ENCODE measurements at regions of chr1 and their contacts with region 1.

Region 1: DNA sequence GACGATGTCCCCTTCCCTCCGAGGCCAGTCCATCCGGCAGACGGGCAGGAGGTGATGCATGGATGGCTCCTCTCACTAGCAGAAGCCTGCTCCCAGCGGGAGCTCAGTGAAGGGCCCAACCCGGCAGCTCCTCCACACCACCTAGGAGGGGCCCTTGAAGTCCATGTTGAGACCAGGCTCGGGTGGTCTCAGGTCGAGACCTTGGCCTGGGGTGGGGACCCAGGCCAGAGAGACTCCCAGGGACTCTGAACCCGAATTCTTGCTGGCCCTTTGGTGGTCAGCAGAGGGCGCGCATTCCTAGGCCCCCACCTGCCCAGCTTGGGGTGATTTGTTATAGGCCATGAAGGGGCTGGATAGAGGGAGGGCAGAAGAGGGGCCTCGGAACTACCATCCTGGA is 642 bp upstream of the NT5C1A start:
- DNase-seq: peak; percentile 68
- ATAC-seq: peak; percentile 64
- H3K4me3 Mint-ChIP-seq: peak overlapping the region; percentile 63
- H3K27ac Mint-ChIP-seq: no peak overlapping the region
- H3K4me1 Mint-ChIP-seq: no peaks in the 10 kb centered on the region
- H3K27me3 Mint-ChIP-seq: peaks cover 100% of the 10 kb centered on the region
- CTCF ChIP-seq: peak; percentile 33; the same call in 1 of the 2 replicates

Region 2: GRCh38 chr1:39683591-39684312 is 11.2 kb after region 1 on chr1:
- CTCF ChIA-PET with region 1: interaction called, 58 read pairs
- POLR2A ChIA-PET with region 1: no interaction called
- DNase-seq: peak; percentile 50
- ATAC-seq: peak; percentile 81
- H3K4me3 Mint-ChIP-seq: peak overlapping the region; percentile 29; the same call in 1 of the 2 replicates
- H3K27ac Mint-ChIP-seq: no peak overlapping the region
- H3K4me1 Mint-ChIP-seq: no peaks in the 10 kb centered on the region; the same call in 1 of the 2 replicates
- H3K27me3 Mint-ChIP-seq: peaks cover 100% of the 10 kb centered on the region
- CTCF ChIP-seq: no peak

Region 3: DNA sequence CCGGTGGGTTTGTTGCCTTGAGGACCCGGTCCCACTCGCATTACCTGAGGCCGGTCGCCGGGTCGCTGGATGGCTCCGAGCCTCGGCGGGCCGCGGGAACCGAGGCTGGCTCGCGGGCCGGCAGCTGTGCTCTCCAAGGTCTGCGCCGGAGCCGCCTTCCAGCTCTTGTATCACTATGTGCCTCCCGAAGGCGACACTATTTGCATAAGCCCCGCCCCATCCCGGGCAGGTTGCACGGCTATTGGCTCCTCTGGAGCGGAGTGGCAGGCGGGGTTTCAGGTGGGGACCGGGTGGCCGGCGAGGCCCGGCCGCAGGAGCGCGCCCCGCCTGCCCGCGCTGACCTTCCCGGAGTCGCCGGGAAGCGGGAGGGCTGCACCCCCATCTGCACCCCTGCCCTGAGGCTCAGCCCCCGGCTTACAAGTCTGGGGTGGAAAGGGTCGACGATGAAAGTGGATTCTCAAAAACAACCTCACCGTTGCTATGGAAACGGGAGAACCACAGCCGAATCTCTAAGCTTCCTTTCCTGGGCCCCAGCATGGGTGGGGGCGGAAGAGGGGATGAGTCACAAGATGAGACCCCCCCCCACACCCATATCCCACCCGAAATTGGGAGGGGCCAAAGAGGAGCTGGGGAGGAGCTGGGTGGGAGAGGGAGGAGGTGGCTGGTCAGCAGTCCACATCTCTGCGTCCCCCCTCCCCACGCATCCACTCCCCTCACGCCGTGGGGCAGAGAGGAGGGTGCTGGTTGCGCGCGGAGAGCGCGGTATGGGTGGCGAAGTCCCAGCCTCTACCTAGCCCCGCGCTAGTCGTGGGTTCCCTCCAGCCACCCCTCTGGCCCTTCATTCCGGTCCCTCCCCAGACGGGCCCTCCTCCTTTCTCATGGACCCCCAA is 19.0 kb after region 1 on chr1 and contains the start of gene HPCAL4:
- CTCF ChIA-PET with region 1: interaction called, 58 read pairs
- POLR2A ChIA-PET with region 1: no interaction called
- DNase-seq: peak; percentile 98
- ATAC-seq: peak; percentile 98
- H3K4me3 Mint-ChIP-seq: peak within 1 kb of the TSS; percentile 59
- H3K27ac Mint-ChIP-seq: no peak within 1 kb of the TSS
- H3K4me1 Mint-ChIP-seq: peaks cover 4% of the 10 kb centered on the region
- H3K27me3 Mint-ChIP-seq: peaks cover 100% of the 10 kb centered on the region
- CTCF ChIP-seq: no peak
- total RNA-seq, gene HPCAL4: 0.50 to 0.80 TPM (median 0.60 TPM) in 3 replicates

Region 4: GRCh38 chr1:39711104-39711965 is 38.8 kb after region 1 on chr1:
- CTCF ChIA-PET with region 1: interaction called, 19 read pairs
- POLR2A ChIA-PET with region 1: no interaction called
- DNase-seq: no peak
- ATAC-seq: peak; percentile 17; the same call in 1 of the 2 replicates
- H3K4me3 Mint-ChIP-seq: no peak overlapping the region
- H3K27ac Mint-ChIP-seq: no peak overlapping the region
- H3K4me1 Mint-ChIP-seq: peaks cover 12% of the 10 kb centered on the region
- H3K27me3 Mint-ChIP-seq: peaks cover 100% of the 10 kb centered on the region
- CTCF ChIP-seq: no peak

Region 5: GRCh38 chr1:39720094-39720999 is 47.8 kb after region 1 on chr1:
- CTCF ChIA-PET with region 1: interaction called, 35 read pairs
- POLR2A ChIA-PET with region 1: no interaction called
- DNase-seq: no peak
- ATAC-seq: no peak; the same call in 1 of the 2 replicates
- H3K4me3 Mint-ChIP-seq: no peak overlapping the region
- H3K27ac Mint-ChIP-seq: no peak overlapping the region
- H3K4me1 Mint-ChIP-seq: no peaks in the 10 kb centered on the region
- H3K27me3 Mint-ChIP-seq: peaks cover 94% of the 10 kb centered on the region
- CTCF ChIP-seq: peak; percentile 51; the same call in 1 of the 2 replicates

Region 6: GRCh38 chr1:39776400-39776713 is 103.8 kb after region 1 on chr1:
- CTCF ChIA-PET with region 1: no interaction called
- POLR2A ChIA-PET with region 1: no interaction called
- DNase-seq: no peak
- ATAC-seq: no peak
- H3K4me3 Mint-ChIP-seq: no peak overlapping the region
- H3K27ac Mint-ChIP-seq: no peak overlapping the region
- H3K4me1 Mint-ChIP-seq: 0 out of 2 replicates have a peak, but pooled peaks cover 3% of the 10 kb centered on the region
- H3K27me3 Mint-ChIP-seq: peaks cover 26% of the 10 kb centered on the region
- CTCF ChIP-seq: no peak